Mammary epithelial cell (primary cell): ENCODE measurements at regions of chr5 and their contacts with region 1.

Region 1: DNA sequence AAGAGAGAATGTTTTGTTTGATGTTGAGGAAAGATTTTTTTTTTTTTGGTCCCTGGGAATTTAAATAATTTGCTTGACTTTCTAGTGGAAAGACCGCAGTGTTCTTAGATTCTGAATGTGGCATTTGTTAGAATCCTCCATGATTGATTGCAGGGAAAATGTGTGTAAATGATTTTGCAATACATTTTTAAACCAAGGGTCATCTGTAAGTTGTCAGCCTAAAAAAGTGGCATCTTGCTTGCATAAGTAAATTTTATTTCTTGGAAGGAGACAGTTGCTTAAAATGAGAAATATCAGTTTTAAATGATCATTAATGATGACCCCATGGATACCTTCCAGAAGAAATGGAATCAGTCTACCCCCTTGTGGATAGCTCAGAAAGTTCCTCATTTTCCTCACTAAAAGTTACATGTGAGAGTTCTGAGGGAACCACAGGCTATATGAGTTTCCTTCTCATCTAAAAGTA is 105.1 kb upstream of the SLC25A48 start:
- DNase-seq: no peak
- H3K4me3 ChIP-seq: no peak overlapping the region
- H3K27ac ChIP-seq: no peak overlapping the region
- H3K4me1 ChIP-seq: peaks cover 2% of the 10 kb centered on the region
- H3K27me3 ChIP-seq: no peaks in the 10 kb centered on the region
- CTCF ChIP-seq: peak; percentile 59 to 68

Region 2: DNA sequence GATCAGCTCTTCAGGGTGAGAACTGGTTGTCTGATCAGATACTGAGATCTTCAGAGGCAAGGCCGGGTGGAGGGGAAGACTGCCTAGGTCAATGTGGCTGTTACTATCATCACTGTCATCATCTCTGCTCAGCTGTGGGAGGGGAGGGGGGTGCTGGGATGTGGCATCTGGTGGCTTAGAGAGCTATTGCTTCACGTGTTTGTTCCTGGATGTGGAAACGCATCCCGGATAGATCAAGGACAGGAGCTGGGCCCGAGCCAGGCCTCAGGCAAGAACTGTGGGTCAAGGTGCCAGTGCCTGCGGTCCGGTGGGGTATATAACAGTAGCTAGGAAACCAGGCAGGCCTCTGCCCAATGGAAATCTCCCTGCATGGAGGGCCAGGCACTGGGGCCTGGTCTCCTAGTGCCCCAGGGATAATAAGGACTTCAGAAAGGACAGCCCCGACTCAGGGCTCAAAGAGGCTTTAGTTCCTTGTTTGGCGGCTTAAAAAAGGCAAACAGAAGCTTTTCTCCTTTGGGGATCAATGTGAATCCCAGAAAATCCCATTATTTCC is 246.9 kb before region 1 on chr5:
- CTCF ChIA-PET with region 1: no interaction called
- dilution Hi-C with region 1: loop called (anchors 5 kb)
- in situ Hi-C with region 1: no loop called
- intact Hi-C with region 1: no loop called
- DNase-seq: no peak
- H3K4me3 ChIP-seq: no peak overlapping the region
- H3K27ac ChIP-seq: no peak overlapping the region
- H3K4me1 ChIP-seq: no peaks in the 10 kb centered on the region
- H3K27me3 ChIP-seq: no peaks in the 10 kb centered on the region
- CTCF ChIP-seq: no peak

Region 3: GRCh38 chr5:135565725-135566421 is 163.5 kb before region 1 on chr5:
- CTCF ChIA-PET with region 1: interaction called, 32 read pairs
- dilution Hi-C with region 1: loop called (anchors 25 kb)
- in situ Hi-C with region 1: loop called in 1 of 2 experiments (anchors 5 kb)
- intact Hi-C with region 1: loop called (anchors 1 kb)
- DNase-seq: peak; percentile 26
- H3K4me3 ChIP-seq: no peak overlapping the region
- H3K27ac ChIP-seq: no peak overlapping the region
- H3K4me1 ChIP-seq: peaks cover 3% of the 10 kb centered on the region
- H3K27me3 ChIP-seq: no peaks in the 10 kb centered on the region
- CTCF ChIP-seq: peak; percentile 93 to 96

Region 4: GRCh38 chr5:135693371-135693955 is 35.9 kb before region 1 on chr5:
- CTCF ChIA-PET with region 1: no interaction called
- dilution Hi-C with region 1: no loop called
- in situ Hi-C with region 1: no loop called
- intact Hi-C with region 1: loop called (anchors 2 kb)
- DNase-seq: peak; percentile 87
- H3K4me3 ChIP-seq: no peak overlapping the region
- H3K27ac ChIP-seq: peak overlapping the region; percentile 46
- H3K4me1 ChIP-seq: peaks cover 20% of the 10 kb centered on the region
- H3K27me3 ChIP-seq: no peaks in the 10 kb centered on the region
- CTCF ChIP-seq: no peak

Region 5: DNA sequence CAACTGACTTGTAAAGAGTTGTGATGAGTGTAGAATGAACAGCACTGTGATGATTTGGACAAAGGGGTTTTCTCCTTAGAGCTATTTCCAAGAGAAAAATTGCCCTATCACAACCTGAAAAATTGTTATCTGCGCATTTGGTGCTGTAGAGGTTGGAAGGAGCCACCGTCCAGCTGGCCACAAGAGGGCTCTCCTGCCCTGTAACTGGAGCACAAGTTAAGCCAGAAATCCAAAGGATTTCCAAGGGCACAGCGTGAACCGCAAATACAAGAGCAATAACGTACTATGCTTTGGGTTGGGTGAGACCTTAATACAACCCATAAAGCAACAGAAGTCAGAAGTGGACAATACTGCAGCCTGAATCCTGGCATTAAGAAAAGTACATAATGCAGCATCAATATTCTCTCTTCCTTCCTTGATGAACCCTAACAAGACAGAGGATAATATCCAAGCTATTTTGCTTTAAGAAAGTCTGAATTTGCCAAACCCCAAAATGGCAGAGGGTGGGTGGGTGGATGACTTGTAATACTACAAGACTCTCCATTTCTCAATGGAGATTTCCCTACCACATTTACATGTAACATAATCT is 520.4 kb after region 1 on chr5:
- CTCF ChIA-PET with region 1: no interaction called
- dilution Hi-C with region 1: loop called (anchors 25 kb)
- in situ Hi-C with region 1: no loop called
- intact Hi-C with region 1: no loop called
- DNase-seq: peak; percentile 37
- H3K4me3 ChIP-seq: no peak overlapping the region
- H3K27ac ChIP-seq: no peak overlapping the region
- H3K4me1 ChIP-seq: peaks cover 10% of the 10 kb centered on the region
- H3K27me3 ChIP-seq: no peaks in the 10 kb centered on the region
- CTCF ChIP-seq: peak; percentile 97 to 98